Right ventricle myocardium superior (tissue), 1 donor: ENCODE measurements at regions of chr9 and their contacts with region 1.

Region 1: DNA sequence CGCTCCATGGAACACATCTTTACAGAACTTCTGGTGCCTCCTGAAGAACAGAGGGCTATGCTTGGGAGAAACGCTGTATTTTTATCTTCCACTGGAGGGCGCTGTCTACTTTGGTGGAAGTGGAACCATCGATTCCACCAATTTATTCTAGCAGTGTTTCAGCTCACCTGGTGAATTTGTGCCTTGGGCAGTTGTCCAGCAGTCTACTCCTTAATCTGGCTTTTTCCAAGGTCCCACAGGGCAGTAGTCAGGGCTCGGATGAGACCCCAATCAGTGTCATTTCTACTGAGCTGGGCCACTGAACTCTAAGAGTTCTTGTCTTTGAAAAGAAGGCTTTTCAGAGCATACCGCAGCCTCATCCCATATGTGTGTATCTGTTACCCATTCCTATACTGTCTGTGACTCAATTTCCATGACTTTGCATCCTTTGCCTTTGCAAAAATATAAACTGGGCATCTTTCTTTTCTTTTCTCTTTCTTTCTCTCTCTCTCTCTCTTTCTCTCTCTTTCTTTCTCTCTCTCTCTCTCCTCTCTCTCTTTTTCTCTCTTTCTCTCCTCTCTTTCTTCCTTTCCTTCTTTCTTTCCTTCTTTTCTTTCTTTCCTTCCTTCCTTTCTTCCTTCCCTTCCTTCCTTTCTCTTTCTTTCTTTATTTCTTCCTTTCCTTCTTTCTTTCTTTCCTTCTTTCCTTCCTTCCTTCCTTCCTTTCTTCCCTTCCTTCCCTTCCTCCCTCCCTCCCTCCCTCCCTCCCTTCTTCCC is 138.4 kb upstream of the ZNF618 start:
- DNase-seq: no peak
- ATAC-seq: peak; percentile 51

Region 2: DNA sequence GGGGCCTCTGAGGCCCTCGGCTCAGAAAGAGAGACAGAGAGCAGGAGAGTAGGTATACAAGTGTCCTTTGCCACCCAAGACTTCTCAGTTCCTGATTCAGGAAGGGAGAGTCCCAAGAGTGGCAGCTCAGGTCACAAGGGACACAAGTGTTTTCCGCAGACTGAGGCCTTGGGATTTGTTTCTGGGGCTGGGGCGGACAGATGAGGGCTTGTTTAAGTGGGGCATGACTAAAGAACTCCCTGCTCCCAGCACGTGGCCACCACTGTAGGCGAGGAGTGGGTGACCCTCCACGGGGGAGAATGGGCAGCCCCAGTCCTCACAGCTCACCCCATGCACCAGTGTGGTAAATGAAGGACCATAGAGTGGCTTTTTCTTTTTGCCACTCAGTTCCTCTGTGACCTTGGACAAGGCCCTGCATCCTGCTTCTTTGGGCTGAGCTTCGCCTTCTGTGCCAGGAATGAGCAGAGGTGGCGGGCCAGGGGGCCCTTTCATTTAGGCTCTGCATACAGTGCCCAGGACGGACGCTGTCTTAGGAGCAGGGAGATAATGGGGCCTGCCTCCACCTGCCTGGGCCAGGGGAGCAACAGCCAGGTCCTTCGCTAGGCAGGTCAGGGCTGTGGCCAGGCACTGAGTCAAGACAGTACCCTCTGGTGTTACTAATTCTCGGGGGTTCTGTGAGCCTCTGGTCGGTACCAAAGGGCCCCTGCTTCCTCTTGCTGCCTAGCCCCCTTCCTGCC is 289.6 kb after region 1 on chr9:
- intact Hi-C with region 1: loop called (anchors 5 kb)
- DNase-seq: no peak
- ATAC-seq: no peak